HEK293 (cell line): ENCODE measurements at regions of chr1 and their contacts with region 1.

Region 1: DNA sequence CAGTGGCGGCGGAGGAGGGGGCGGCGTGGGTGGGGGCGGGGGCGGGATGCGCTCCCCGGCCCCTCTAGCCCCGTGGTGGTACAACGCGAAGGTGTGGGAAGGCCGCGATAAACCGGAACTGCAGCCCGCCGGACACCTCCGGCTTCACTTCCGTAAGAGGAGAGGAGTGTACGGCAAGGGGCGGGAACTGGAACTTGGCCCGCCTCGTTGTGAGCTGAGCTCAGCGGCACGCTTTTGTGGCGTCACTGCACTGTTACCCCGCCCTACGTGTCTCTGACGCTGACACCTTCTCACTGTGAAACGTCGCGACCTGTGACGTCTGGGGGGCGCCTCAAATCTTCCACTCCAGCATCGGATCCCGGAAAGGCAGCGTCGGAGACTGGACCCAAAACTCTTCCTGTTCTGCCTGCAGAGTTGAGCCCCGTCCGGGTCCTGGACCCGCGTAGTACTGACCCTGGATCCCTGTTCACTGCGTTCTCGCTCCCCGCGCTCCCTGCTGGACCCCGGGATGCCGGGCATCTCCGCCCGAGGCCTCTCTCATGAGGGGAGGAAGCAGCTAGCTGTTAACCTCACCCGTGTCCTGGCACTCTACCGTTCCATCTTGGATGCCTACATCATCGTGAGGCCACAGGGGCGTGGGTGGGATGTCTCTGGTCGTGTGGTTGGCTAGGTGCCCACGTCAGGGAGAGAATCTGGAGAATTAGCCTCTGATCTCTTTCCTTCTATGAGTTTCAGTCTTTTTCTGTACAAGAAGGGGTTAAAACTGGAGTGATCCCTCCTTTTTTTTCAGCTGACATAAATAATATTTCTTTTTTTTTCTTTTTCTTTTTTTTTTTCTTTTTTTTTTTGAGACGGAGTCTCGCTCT is at the start of gene ISG20L2:
- H3K4me3 ChIP-seq: peak within 1 kb of the TSS; percentile 85
- H3K27ac ChIP-seq: peak within 1 kb of the TSS; percentile 72
- H3K4me1 ChIP-seq: peaks cover 7% of the 10 kb centered on the region
- CTCF ChIP-seq: peak; percentile 63; the same call in 1 of the 2 replicates

Region 2: GRCh38 chr1:156618853-156619581 is 109.8 kb before region 1 on chr1 and contains the start of gene HAPLN2:
- CTCF ChIA-PET with region 1: interaction called, 40 read pairs
- POLR2A ChIA-PET with region 1: interaction called, 6 read pairs
- H3K4me3 ChIP-seq: no peak within 1 kb of the TSS
- H3K27ac ChIP-seq: no peak within 1 kb of the TSS
- H3K4me1 ChIP-seq: peaks cover 5% of the 10 kb centered on the region
- CTCF ChIP-seq: peak; percentile 54; the same call in 1 of the 2 replicates

Region 3: DNA sequence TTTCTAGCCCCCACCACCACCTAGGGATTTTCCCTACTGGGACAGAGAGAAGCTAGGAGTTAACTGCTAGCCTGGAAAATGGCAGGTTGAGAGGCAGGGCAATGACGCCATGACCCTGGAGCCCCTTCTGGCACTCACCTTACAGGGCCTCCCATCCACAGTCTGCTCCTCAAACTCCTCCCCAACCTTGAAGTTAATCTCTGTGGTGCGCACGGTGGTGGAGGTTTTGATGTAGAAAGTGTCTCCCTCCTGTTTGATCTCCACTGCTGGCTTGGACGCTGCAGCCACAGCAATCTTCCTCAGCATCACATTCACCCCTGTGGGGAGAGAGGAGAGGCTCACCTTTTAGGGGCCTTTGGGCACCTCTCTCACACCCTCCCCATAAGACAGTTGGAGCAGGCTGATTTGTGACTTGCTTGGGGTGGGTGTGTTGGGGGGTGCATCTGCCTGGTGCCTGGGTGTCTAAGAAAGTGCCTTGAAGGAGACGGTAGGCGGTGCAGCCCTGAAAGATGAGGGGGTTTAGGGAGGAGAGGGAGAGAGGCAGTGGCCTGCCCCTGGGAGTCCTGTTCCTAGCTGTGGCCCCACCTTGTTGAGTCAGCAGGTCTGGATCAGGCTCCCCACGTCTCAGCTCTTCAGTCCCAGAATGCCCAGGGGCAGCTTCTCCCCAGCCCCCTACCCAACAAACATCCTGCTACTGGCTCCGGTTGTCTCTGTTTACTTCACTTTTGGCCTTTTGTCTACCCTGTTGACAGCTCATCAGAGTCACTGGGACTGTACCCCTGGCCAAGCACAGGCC is 27.9 kb before region 1 on chr1:
- CTCF ChIA-PET with region 1: interaction called, 55 read pairs
- POLR2A ChIA-PET with region 1: interaction called, 5 read pairs
- H3K4me3 ChIP-seq: no peak overlapping the region
- H3K27ac ChIP-seq: no peak overlapping the region
- H3K4me1 ChIP-seq: peaks cover 9% of the 10 kb centered on the region; the same call in 1 of the 2 replicates
- CTCF ChIP-seq: no peak

Region 4: GRCh38 chr1:156746728-156747631 is 18.1 kb after region 1 on chr1:
- CTCF ChIA-PET with region 1: interaction called, 19 read pairs
- POLR2A ChIA-PET with region 1: interaction called, 84 read pairs
- H3K4me3 ChIP-seq: peak overlapping the region; percentile 51
- H3K27ac ChIP-seq: peak overlapping the region; percentile 95
- H3K4me1 ChIP-seq: peaks cover 11% of the 10 kb centered on the region; the same call in 1 of the 2 replicates
- CTCF ChIP-seq: peak; percentile 66

Region 5: DNA sequence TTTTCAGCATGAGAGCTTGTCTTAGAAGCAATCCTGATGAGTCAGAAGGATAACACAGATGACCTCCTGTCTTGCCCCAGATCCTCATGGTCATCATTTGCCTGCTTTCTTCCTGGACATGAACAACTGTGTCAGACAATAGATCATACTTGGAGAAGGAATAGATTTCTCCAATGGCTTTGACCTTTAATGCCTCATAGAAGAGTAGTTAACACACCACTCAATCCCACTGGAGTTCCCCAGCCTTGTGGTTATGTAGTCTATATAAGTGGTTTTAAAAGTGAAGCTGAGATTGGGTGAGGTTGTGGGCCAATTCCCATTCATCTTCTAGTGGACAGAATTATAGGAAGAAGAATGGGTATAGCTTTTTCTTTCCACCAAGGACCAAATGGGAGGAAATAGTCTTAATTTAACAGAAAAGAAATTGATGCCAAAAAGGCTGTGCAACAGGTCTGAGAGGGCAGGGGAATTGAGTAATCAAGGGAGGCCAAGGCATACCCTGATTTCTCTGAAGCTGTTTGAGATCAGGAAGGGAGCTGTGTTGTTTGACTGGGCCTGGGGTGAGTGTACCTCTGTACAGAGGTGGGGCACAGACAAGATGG is 52.9 kb after region 1 on chr1:
- CTCF ChIA-PET with region 1: interaction called, 12 read pairs
- POLR2A ChIA-PET with region 1: interaction called, 3 read pairs
- H3K4me3 ChIP-seq: no peak overlapping the region
- H3K27ac ChIP-seq: no peak overlapping the region
- H3K4me1 ChIP-seq: 0 out of 2 replicates have a peak, but pooled peaks cover 4% of the 10 kb centered on the region
- CTCF ChIP-seq: no peak

Region 6: DNA sequence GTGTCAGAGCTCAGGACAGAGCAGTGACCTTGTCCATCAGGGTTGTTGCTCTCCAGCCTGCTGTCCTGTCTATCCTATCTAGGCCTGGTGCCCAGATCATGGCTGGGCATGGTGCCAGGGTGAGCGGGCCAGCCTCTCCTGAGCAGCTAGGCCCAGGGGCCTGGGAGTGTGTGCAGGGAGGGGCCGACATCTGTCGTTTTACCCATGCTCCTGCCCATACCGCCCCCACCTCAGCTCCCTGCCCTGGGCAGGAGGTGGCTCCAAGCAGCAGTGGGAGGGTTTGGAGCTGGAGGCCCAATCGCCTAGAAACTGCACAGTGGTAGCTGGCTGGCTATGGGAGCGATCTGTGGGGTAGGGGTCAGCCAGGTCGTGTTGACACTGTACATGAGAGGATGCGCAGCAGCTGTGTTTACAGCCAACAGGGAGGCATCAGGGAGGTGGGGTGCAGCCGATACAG is 123.6 kb after region 1 on chr1:
- CTCF ChIA-PET with region 1: interaction called, 129 read pairs
- POLR2A ChIA-PET with region 1: interaction called, 3 read pairs
- H3K4me3 ChIP-seq: no peak overlapping the region
- H3K27ac ChIP-seq: no peak overlapping the region
- H3K4me1 ChIP-seq: no peaks in the 10 kb centered on the region
- CTCF ChIP-seq: no peak

Region 7: DNA sequence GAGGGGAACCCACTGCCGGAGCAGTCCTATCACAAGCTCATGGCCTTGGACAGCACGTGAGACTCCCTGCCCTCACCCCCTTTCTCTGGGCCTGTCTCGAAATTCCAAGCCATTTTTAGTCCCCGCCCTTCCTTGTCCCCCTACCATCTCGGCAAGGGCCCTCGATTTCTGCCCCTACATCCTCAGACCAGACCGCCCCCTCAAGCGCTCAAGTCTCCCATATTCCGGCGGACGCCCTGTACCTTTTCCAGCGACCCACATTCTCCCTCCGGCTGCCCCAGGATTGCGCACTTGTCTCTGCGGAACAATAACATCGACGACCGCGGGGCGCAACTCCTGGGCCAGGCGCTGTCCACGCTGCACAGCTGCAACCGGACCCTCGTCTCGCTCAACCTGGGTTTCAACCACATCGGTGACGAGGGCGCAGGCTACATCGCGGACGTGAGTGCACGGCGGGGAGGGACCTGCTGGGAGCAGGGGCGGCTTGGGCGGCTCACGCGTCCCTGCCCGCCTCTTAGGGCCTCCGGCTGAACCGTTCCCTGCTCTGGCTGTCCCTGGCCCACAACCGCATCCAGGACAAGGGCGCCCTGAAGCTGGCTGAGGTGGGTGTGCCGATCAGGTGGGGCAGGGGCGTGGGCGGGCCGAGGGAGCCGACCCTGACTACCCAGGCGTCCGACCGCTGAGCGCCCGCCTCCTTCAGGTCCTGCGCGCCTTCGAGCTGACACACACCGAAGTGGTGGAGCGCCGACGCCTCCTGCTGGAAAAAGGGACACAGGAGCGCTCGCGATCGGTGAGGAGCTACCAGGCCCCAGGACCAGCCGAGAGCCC is 198.6 kb after region 1 on chr1:
- CTCF ChIA-PET with region 1: interaction called, 41 read pairs
- POLR2A ChIA-PET with region 1: interaction called, 4 read pairs
- H3K4me3 ChIP-seq: peak overlapping the region; percentile 33
- H3K27ac ChIP-seq: no peak overlapping the region; the same call in 1 of the 2 replicates
- H3K4me1 ChIP-seq: no peaks in the 10 kb centered on the region; the same call in 1 of the 2 replicates
- CTCF ChIP-seq: peak; percentile 90